Ascending aorta (tissue), 2 donors: ENCODE measurements at regions of chr12 and their contacts with region 1.

Region 1: GRCh38 chr12:11040162-11040561 is 9.0 kb upstream of the TAS2R31 start:
- DNase-seq: no peak
- H3K4me3 ChIP-seq: no peak overlapping the region
- H3K27ac ChIP-seq: no peak overlapping the region
- H3K4me1 ChIP-seq: no peaks in the 10 kb centered on the region
- H3K27me3 ChIP-seq: no peaks in the 10 kb centered on the region
- CTCF ChIP-seq: no peak

Region 2: GRCh38 chr12:11007608-11008007 is 32.6 kb before region 1 on chr12:
- intact Hi-C with region 1: no loop called
- DNase-seq: no peak
- H3K4me3 ChIP-seq: no peak overlapping the region
- H3K27ac ChIP-seq: no peak overlapping the region
- H3K4me1 ChIP-seq: no peaks in the 10 kb centered on the region
- H3K27me3 ChIP-seq: no peaks in the 10 kb centered on the region
- CTCF ChIP-seq: no peak

Region 3: GRCh38 chr12:11067514-11067913 is 27.4 kb after region 1 on chr12:
- intact Hi-C with region 1: loop called (anchors 2 kb)
- DNase-seq: no peak
- H3K4me3 ChIP-seq: no peak overlapping the region
- H3K27ac ChIP-seq: no peak overlapping the region
- H3K4me1 ChIP-seq: no peaks in the 10 kb centered on the region
- H3K27me3 ChIP-seq: no peaks in the 10 kb centered on the region
- CTCF ChIP-seq: no peak

Region 4: GRCh38 chr12:11092128-11092527 is 52.0 kb after region 1 on chr12 and contains the start of gene TAS2R43:
- intact Hi-C with region 1: loop called (anchors 2 kb)
- DNase-seq: no peak
- H3K4me3 ChIP-seq: no peak within 1 kb of the TSS
- H3K27ac ChIP-seq: no peak within 1 kb of the TSS
- H3K4me1 ChIP-seq: no peaks in the 10 kb centered on the region
- H3K27me3 ChIP-seq: no peaks in the 10 kb centered on the region
- CTCF ChIP-seq: no peak
- total RNA-seq, gene TAS2R43: not detected